ENCODE measurements at regions of chr4 and their contacts with region 1.

Region 1: DNA sequence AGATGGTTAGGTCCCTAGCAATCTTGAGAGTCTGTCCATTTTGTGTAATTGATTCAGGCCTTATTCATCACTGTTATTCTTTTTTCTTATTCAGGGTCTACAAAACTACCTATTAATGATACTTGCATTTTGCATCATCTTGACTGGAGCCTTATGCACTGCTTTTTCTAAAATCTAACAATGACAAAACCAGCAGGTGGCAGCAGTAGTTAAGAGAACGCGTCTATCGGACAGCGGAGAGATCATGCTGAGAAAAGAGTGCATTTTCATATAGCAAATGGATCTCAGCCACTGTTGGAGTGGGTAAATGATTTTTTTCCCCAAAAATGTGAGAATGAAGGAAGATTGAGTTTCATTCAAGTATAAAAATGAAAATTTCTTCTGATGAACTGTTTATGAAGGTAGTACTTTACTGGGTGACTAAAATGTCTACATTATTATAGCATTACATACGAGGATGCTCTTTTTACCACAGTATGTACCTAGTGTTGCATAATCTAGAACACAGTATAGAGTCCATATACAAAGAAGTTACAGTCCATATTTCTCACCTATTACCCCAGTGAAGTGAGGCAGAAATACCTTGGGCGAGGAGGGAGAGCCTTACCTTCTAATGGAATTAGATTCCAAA is 43.2 kb downstream of the TMEM144 start:
- DNase-seq: peak; percentile 15 to 52 (median 46)
- H3K4me3 ChIP-seq: no peak overlapping the region
- H3K4me3 Mint-ChIP-seq: no peak overlapping the region
- H3K27ac ChIP-seq: no peak overlapping the region
- H3K27ac Mint-ChIP-seq: no peak overlapping the region
- H3K4me1 ChIP-seq: peaks cover 8 to 13% of the 10 kb centered on the region in 2 donors
- H3K4me1 Mint-ChIP-seq: peaks cover 15% of the 10 kb centered on the region
- H3K27me3 ChIP-seq: no peaks in the 10 kb centered on the region
- H3K27me3 Mint-ChIP-seq: no peaks in the 10 kb centered on the region
- CTCF ChIP-seq: peak; percentile 67

Region 2: GRCh38 chr4:158197194-158197776 is 56.2 kb before region 1 on chr4:
- intact Hi-C with region 1: loop called in 1 of 2 experiments (anchors 5 kb)
- DNase-seq: no peak
- H3K4me3 ChIP-seq: no peak overlapping the region
- H3K4me3 Mint-ChIP-seq: no peak overlapping the region
- H3K27ac ChIP-seq: no peak overlapping the region
- H3K27ac Mint-ChIP-seq: peak overlapping the region in 1 of 7 donors; percentile 0
- H3K4me1 ChIP-seq: peaks cover 10 to 12% of the 10 kb centered on the region in 2 donors
- H3K4me1 Mint-ChIP-seq: peaks cover 15% of the 10 kb centered on the region
- H3K27me3 ChIP-seq: no peaks in the 10 kb centered on the region
- H3K27me3 Mint-ChIP-seq: no peaks in the 10 kb centered on the region
- CTCF ChIP-seq: no peak

Region 3: GRCh38 chr4:158624889-158625478 is 371.5 kb after region 1 on chr4:
- intact Hi-C with region 1: loop called (anchors 5 kb)
- DNase-seq: peak; percentile 54 to 79 (median 70)
- H3K4me3 ChIP-seq: no peak overlapping the region
- H3K4me3 Mint-ChIP-seq: no peak overlapping the region
- H3K27ac ChIP-seq: no peak overlapping the region
- H3K27ac Mint-ChIP-seq: no peak overlapping the region
- H3K4me1 ChIP-seq: no peaks in the 10 kb centered on the region
- H3K4me1 Mint-ChIP-seq: no peaks in the 10 kb centered on the region
- H3K27me3 ChIP-seq: no peaks in the 10 kb centered on the region
- H3K27me3 Mint-ChIP-seq: peaks cover 0 to 2% (median 2%) of the 10 kb centered on the region in 3 donors
- CTCF ChIP-seq: peak; percentile 82

Measured in CD14-positive monocyte (primary cell).